ENCODE measurements at regions of chr4 and their contacts with region 1.

Region 1: DNA sequence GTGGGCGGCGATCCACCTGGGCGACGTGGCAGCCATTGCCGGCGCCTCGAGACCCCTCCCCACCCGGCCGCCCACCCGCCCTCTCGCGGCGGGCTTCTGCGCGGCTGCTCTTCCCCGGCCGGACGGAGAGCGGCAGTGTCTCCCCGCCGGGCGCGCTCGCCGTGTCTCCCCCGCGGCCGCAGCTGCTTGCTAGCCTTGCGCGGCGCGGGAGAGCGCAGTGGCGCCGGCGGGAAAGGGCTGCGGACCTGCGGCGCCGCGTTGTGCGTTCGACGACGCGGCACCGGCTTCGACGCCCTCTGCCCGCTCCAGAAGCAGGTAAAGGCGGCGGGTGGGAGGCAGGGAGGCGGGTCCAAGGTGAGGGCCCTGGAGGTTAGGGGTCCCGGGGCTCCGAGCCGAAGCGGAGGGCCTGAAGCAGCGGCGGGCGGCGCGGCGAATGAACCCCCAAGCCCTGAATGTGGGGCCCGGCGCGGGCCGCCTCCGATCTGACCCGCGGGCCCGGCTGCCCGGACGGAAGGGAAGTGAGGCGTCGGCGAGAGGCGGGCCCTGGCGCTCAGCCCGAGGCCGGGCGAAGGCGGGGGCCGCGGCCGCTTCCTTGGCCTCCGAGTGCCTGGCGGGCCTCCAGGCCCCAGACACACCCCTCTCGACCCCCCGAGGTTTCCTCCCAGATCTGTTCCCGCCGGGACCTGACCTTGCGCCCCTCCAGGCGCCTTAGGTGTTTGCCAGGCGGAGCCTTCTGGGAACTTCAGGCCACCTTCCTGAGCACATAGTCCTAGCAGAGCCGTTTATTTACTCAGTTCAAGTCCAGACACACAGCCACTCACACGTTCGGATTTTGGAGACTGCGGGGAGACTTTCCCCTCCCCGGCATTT is at the start of gene N4BP2:
- DNase-seq: peak; percentile 75
- ATAC-seq: peak; percentile 68
- H3K4me3 Mint-ChIP-seq: peak within 1 kb of the TSS; percentile 95
- H3K27ac Mint-ChIP-seq: peak within 1 kb of the TSS; percentile 92
- H3K4me1 Mint-ChIP-seq: peaks cover 27% of the 10 kb centered on the region
- H3K27me3 Mint-ChIP-seq: no peaks in the 10 kb centered on the region
- CTCF ChIP-seq: no peak
- total RNA-seq, gene N4BP2: 6.0 and 6.2 TPM in 2 replicates

Region 2: DNA sequence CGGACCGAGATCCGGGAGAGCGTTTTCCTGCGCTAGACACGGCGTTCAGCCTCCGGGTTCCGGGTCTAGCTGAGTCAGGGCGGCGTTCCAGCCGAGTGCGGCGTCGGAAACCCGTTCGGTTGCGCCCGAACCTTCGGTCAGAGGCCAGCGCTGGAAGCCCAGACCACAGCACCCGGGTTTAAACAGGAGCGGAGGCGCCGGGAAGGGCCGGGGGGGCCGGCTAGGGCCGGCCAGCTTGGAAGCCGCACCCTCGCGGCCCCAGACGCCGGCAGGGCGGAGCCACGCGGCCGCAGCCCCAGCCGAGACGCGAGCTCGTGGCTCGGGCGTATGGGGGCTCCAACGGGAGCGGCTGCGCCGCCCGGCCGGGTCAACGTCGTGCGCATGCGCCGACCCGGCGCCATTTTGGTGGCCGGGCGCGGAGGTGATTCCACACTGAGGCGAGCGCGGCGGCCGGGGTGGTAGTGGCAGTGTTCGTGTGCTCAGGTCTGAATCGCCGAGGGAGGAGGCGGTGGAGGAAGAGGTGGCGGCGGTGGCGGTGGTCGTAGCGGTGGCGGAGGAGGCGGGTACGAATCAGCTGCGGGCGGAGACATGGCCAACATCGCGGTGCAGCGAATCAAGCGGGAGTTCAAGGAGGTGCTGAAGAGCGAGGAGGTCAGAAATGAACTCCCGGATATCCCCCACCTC is 359.1 kb before region 1 on chr4 and contains the start of gene UBE2K:
- CTCF ChIA-PET with region 1: no interaction called
- POLR2A ChIA-PET with region 1: no interaction called
- intact Hi-C with region 1: loop called (anchors 1 kb)
- DNase-seq: peak; percentile 93
- ATAC-seq: peak; percentile 89
- H3K4me3 Mint-ChIP-seq: peak within 1 kb of the TSS; percentile 99
- H3K27ac Mint-ChIP-seq: peak within 1 kb of the TSS; percentile 96
- H3K4me1 Mint-ChIP-seq: peaks cover 48% of the 10 kb centered on the region
- H3K27me3 Mint-ChIP-seq: no peaks in the 10 kb centered on the region
- CTCF ChIP-seq: no peak
- total RNA-seq, gene UBE2K: 54.4 and 64.0 TPM in 2 replicates

Region 3: DNA sequence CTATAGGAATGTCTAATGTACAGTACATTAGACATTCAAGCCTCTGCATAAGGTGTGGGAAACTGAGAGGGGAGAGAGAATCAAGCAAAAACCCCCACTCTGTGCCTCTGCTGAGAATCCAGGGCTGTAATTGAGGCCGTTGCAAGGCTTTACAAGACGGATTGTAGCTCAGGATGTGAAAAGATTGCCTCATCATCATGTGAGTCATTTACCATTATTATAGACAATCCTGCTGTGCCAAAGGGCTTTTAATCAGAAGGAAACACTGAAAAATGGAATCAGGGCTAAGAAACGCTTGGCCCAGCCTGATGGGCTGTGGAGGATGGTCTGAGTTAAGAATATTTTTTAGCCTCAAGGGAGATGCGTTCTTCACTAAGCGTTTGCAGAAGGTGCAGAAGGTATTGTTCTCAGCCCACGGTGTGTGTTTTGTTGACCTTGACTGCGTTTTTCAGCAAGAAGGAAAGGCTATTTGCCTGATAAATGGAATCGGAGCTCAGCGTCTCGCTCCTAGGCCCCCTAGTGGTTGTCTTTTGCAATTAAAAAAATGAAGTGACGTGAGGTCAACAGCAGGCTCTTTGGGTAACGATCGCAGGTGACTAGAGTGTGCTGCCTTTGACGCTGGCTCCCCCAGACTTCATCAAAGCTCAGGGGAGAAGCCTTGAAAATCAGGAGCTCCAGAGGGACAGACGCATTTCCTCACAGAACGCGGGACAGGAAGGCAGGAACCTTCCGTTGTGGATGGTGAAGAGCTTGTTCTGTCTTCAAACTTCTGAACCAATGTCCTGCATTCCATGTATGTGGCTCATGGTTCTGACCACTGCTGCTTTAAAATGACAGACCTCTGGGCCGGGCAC is 260.1 kb after region 1 on chr4:
- CTCF ChIA-PET with region 1: interaction called, 21 read pairs
- POLR2A ChIA-PET with region 1: interaction called, 6 read pairs
- intact Hi-C with region 1: loop called (anchors 2 kb)
- DNase-seq: peak; percentile 38
- ATAC-seq: peak; percentile 82
- H3K4me3 Mint-ChIP-seq: peak overlapping the region; percentile 84
- H3K27ac Mint-ChIP-seq: peak overlapping the region; percentile 87
- H3K4me1 Mint-ChIP-seq: peaks cover 28% of the 10 kb centered on the region
- H3K27me3 Mint-ChIP-seq: no peaks in the 10 kb centered on the region
- CTCF ChIP-seq: peak; percentile 48

Region 4: DNA sequence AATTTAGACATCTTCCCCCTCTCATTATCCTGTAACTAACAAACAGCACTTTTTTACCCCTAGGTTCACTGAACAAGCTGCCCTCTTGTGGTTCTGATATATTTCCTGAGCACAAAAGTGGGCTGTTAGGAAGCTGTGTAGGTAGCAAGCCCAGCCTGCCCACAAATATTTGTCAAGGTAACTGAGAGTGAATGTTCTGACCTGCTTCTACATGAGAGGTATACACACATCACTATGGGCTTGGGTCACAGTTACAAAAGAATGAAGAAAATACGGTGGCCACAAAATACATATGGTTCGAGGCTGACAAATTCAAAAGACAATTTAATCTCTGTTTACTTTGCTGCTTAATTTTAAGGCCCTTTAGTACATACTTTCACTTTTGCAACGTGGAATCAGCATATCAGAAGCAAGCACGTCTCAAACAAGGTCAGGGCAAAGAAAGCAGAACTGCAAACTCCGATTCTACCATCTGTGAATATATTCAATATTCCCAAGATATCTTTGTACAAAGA is 494.1 kb after region 1 on chr4:
- CTCF ChIA-PET with region 1: no interaction called
- POLR2A ChIA-PET with region 1: interaction called, 3 read pairs
- intact Hi-C with region 1: loop called (anchors 5 kb)
- DNase-seq: no peak
- ATAC-seq: peak; percentile 78
- H3K4me3 Mint-ChIP-seq: peak overlapping the region; percentile 81
- H3K27ac Mint-ChIP-seq: peak overlapping the region; percentile 83
- H3K4me1 Mint-ChIP-seq: peaks cover 42% of the 10 kb centered on the region
- H3K27me3 Mint-ChIP-seq: no peaks in the 10 kb centered on the region
- CTCF ChIP-seq: no peak

Region 5: GRCh38 chr4:40840985-40841571 is 784.1 kb after region 1 on chr4:
- CTCF ChIA-PET with region 1: interaction called, 6 read pairs
- POLR2A ChIA-PET with region 1: no interaction called
- intact Hi-C with region 1: loop called (anchors 5 kb)
- DNase-seq: peak; percentile 42
- ATAC-seq: peak; percentile 75
- H3K4me3 Mint-ChIP-seq: no peak overlapping the region
- H3K27ac Mint-ChIP-seq: peak overlapping the region; percentile 67
- H3K4me1 Mint-ChIP-seq: peaks cover 35% of the 10 kb centered on the region
- H3K27me3 Mint-ChIP-seq: no peaks in the 10 kb centered on the region
- CTCF ChIP-seq: peak; percentile 34

Measured in activated B cell treated with CpG ODN at 0.5 μM for 24 hours (primary cell).